Activated CD4-positive, alpha-beta memory T cell treated with anti-CD3 and anti-CD28 coated beads, Interleukin-2, amount 10 ng/mL, durations not matched to agents 7 days and 5 days (primary cell): ENCODE measurements at regions of chr6 and their contacts with region 1.

Region 1: GRCh38 chr6:26045065-26045927 is 41.9 kb upstream of the HFE start:
- DNase-seq: peak; percentile 82
- H3K4me3 Mint-ChIP-seq: peak overlapping the region; percentile 79
- H3K27ac Mint-ChIP-seq: peak overlapping the region; percentile 99
- H3K4me1 Mint-ChIP-seq: peaks cover 44% of the 10 kb centered on the region
- H3K27me3 Mint-ChIP-seq: no peaks in the 10 kb centered on the region

Region 2: DNA sequence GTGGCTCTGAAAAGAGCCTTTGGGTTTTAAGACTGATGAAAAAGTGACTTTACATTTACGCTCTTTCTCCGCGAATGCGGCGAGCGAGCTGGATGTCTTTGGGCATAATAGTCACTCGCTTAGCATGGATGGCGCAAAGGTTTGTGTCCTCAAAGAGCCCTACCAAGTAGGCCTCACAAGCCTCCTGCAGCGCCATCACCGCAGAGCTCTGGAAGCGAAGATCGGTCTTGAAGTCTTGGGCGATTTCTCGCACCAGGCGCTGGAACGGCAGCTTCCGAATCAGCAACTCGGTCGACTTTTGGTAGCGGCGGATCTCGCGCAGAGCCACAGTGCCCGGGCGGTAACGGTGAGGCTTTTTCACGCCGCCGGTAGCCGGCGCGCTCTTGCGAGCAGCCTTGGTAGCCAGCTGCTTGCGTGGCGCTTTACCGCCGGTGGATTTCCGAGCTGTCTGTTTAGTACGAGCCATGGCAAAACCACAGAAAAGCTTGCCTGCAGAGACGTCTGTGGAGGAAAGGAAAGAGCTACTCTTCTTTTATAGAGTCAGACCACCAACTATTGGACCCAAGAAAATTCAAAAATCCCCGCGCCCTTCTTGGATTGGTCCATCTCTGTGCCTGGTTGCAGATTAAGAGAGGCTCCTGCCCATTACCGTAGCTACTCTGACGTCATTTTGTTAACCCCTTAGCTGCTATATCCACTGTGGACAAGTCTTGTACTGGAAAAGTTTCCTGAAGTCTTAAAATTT is 13.5 kb before region 1 on chr6:
- CTCF ChIA-PET with region 1: interaction called, 72 read pairs
- POLR2A ChIA-PET with region 1: interaction called, 2,531 read pairs
- DNase-seq: peak; percentile 92
- H3K4me3 Mint-ChIP-seq: peak overlapping the region; percentile 84
- H3K27ac Mint-ChIP-seq: peak overlapping the region; percentile 100
- H3K4me1 Mint-ChIP-seq: peaks cover 74% of the 10 kb centered on the region
- H3K27me3 Mint-ChIP-seq: peaks cover 4% of the 10 kb centered on the region

Region 3: DNA sequence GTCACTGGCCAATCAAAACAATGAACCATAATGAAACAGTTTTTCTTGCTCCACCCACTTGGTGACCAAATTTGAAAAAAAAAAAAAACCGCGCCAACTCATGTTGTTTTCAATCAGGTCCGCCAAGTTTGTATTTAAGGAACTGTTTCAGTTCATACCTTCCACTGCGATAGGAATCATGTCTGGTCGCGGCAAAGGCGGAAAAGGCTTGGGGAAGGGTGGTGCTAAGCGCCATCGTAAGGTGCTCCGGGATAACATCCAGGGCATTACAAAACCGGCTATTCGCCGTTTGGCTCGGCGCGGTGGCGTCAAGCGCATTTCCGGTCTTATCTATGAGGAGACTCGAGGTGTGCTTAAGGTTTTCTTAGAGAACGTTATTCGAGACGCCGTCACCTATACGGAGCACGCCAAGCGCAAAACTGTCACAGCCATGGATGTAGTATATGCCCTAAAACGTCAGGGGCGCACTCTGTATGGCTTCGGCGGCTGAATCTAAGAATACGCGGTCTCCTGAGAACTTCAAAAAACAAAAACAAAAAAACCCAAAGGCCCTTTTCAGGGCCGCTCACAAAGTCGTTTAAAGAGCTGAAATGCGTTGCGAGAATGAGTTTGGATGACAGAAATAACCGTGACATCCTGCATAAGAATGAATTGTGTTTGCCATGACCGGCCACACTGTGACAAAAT is 58.6 kb after region 1 on chr6:
- CTCF ChIA-PET with region 1: interaction called, 6 read pairs
- POLR2A ChIA-PET with region 1: interaction called, 74 read pairs
- DNase-seq: peak; percentile 93
- H3K4me3 Mint-ChIP-seq: peak overlapping the region; percentile 80
- H3K27ac Mint-ChIP-seq: peak overlapping the region; percentile 99
- H3K4me1 Mint-ChIP-seq: peaks cover 23% of the 10 kb centered on the region
- H3K27me3 Mint-ChIP-seq: no peaks in the 10 kb centered on the region

Region 4: GRCh38 chr6:26204332-26205165 is 159.3 kb after region 1 on chr6:
- CTCF ChIA-PET with region 1: interaction called, 3 read pairs
- POLR2A ChIA-PET with region 1: interaction called, 184 read pairs
- DNase-seq: peak; percentile 90
- H3K4me3 Mint-ChIP-seq: no peak overlapping the region
- H3K27ac Mint-ChIP-seq: no peak overlapping the region
- H3K4me1 Mint-ChIP-seq: peaks cover 35% of the 10 kb centered on the region
- H3K27me3 Mint-ChIP-seq: no peaks in the 10 kb centered on the region

Region 5: DNA sequence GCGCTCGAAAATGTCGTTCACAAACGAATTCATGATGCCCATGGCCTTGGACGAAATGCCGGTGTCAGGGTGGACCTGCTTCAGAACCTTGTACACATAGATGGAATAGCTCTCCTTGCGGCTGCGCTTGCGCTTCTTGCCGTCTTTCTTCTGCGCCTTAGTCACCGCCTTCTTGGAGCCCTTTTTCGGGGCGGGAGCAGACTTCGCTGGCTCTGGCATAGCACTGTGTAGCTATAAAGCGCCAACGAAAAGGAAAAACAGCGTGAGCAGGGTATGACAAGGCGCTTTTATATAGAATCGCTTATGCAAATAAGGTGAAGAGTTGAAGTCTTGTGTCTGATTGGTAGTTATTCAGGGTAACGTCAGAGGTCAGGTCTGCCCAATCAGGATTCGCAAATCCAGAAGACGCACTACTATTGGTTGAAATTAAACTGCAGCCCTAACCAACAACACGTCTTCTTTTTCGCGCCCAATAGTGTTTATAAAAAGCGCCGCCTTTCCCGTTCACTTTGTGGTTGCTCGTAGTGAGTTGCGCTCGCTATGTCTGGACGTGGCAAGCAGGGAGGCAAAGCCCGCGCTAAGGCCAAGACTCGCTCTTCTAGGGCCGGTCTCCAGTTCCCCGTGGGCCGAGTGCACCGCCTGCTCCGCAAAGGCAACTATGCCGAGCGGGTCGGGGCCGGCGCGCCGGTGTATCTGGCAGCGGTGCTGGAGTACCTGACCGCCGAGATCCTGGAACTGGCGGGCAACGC is 1087.4 kb after region 1 on chr6:
- CTCF ChIA-PET with region 1: no interaction called
- POLR2A ChIA-PET with region 1: interaction called, 49 read pairs
- DNase-seq: peak; percentile 95
- H3K4me3 Mint-ChIP-seq: no peak overlapping the region
- H3K27ac Mint-ChIP-seq: no peak overlapping the region
- H3K4me1 Mint-ChIP-seq: peaks cover 60% of the 10 kb centered on the region
- H3K27me3 Mint-ChIP-seq: no peaks in the 10 kb centered on the region

Region 6: GRCh38 chr6:27871924-27872638 is 1826.8 kb after region 1 on chr6:
- CTCF ChIA-PET with region 1: no interaction called
- POLR2A ChIA-PET with region 1: interaction called, 69 read pairs
- DNase-seq: peak; percentile 87
- H3K4me3 Mint-ChIP-seq: peak overlapping the region; percentile 81
- H3K27ac Mint-ChIP-seq: peak overlapping the region; percentile 99
- H3K4me1 Mint-ChIP-seq: peaks cover 60% of the 10 kb centered on the region
- H3K27me3 Mint-ChIP-seq: no peaks in the 10 kb centered on the region